Common myeloid progenitor, CD34-positive (primary cell): ENCODE measurements at regions of chr11 and their contacts with region 1.

Region 1: GRCh38 chr11:1694064-1694845 is 2.7 kb upstream of the KRTAP5-6 start:
- DNase-seq: peak; percentile 71 to 82 (median 79)
- H3K4me3 ChIP-seq: peak overlapping the region in 3 of 7 experiments; percentile 57 to 69 (median 63)
- H3K27ac ChIP-seq: no peak overlapping the region
- H3K4me1 ChIP-seq: peaks cover 0 to 27% (median 22%) of the 10 kb centered on the region in 4 experiments
- H3K27me3 ChIP-seq: peaks cover 0 to 3% (median 0%) of the 10 kb centered on the region in 5 experiments

Region 2: GRCh38 chr11:1608363-1608762 is 85.9 kb before region 1 on chr11 and contains the start of gene KRTAP5-3:
- CTCF ChIA-PET with region 1: no interaction called
- POLR2A ChIA-PET with region 1: no interaction called
- DNase-seq: no peak
- H3K4me3 ChIP-seq: no peak within 1 kb of the TSS
- H3K27ac ChIP-seq: no peak within 1 kb of the TSS
- H3K4me1 ChIP-seq: no peaks in the 10 kb centered on the region
- H3K27me3 ChIP-seq: peaks cover 0 to 35% (median 9%) of the 10 kb centered on the region in 5 experiments

Region 3: GRCh38 chr11:1682225-1682905 is 11.9 kb before region 1 on chr11:
- CTCF ChIA-PET with region 1: interaction called, 36 read pairs
- POLR2A ChIA-PET with region 1: no interaction called
- DNase-seq: peak in 2 of 3 donors; percentile 50 to 57
- H3K4me3 ChIP-seq: no peak overlapping the region
- H3K27ac ChIP-seq: no peak overlapping the region
- H3K4me1 ChIP-seq: peaks cover 0 to 10% (median 7%) of the 10 kb centered on the region in 4 experiments
- H3K27me3 ChIP-seq: no peaks in the 10 kb centered on the region

Region 4: DNA sequence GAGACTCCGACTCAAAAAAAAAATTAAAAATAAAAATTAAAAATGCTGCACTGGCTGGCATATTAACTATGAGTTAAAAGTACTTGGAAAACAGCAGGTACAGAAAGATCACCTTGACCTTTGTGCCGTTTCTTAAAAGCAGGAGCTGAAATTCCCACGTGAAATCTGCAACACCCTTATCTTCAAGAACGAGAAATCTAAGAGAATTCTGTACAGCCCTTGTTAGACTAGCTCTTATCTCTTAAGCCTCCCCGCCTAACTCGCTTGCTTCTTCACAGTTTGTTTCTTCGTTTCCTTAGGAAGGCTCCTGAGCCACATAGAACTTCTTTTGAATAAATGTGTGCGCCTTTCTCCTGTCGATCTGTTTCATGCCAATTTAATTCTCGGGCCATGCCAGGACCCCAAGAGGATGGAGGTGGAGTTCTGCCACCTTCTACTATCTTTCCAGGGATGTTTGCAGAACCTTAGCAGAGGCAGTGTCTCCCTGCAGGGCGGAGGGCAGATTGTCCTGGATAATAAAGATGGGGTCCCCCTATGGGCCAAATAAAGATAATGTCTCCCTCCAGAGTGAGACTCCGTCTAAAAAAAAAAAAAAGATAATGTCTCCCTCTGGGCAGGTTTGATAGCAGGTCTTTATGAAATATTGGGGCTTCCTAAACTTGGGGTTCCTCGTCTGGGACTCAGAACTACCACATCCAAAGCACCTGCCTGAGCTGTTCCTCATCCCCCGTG is 113.2 kb after region 1 on chr11:
- CTCF ChIA-PET with region 1: interaction called, 58 read pairs
- POLR2A ChIA-PET with region 1: no interaction called
- DNase-seq: peak; percentile 38 to 66 (median 61)
- H3K4me3 ChIP-seq: no peak overlapping the region
- H3K27ac ChIP-seq: no peak overlapping the region
- H3K4me1 ChIP-seq: peaks cover 0 to 12% (median 4%) of the 10 kb centered on the region in 4 experiments
- H3K27me3 ChIP-seq: peaks cover 0 to 20% (median 4%) of the 10 kb centered on the region in 5 experiments

Region 5: DNA sequence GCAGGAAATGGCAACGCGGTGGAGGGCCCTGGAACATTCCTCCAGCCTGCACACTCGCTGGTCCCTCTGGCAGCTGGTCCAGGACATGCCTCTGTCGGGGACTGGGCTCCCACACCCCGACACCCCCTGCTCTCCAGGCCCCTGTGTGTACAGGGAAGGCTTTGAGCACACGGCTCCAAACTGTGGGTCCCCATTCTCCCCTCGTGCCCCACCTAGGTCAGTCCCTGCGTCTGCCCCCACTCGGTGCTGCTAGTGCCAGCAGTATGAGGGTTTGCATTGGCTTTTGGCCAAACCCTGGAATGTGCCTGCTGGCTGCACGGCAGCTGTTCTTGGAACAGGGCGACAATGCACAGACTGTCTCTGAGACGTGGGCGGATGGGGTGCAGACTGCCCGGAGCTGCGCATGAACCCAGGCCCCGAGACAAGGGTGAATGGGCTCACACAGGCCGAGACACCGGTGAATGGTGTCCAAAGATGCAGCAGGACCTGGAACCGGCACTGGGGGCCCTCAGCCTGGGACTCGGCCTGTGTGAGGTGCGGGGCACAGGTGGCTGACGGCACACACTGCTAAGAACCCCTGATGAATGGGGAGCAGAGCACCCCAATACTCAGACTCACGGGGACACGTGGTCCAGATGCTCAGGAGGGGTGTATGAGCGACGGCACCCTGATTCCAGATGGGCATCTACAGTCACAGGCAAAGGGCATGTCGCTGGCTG is 133.0 kb after region 1 on chr11:
- CTCF ChIA-PET with region 1: interaction called, 213 read pairs
- POLR2A ChIA-PET with region 1: interaction called, 3 read pairs
- DNase-seq: no peak
- H3K4me3 ChIP-seq: no peak overlapping the region
- H3K27ac ChIP-seq: no peak overlapping the region
- H3K4me1 ChIP-seq: peaks cover 0 to 11% (median 8%) of the 10 kb centered on the region in 4 experiments
- H3K27me3 ChIP-seq: peaks cover 0 to 13% (median 0%) of the 10 kb centered on the region in 5 experiments

Region 6: GRCh38 chr11:1876361-1877063 is 182.3 kb after region 1 on chr11:
- CTCF ChIA-PET with region 1: interaction called, 16 read pairs
- POLR2A ChIA-PET with region 1: no interaction called
- DNase-seq: peak in 2 of 3 donors; percentile 41 to 42
- H3K4me3 ChIP-seq: peak overlapping the region in 1 of 7 experiments; percentile 42
- H3K27ac ChIP-seq: no peak overlapping the region
- H3K4me1 ChIP-seq: peaks cover 0 to 55% (median 44%) of the 10 kb centered on the region in 4 experiments
- H3K27me3 ChIP-seq: no peaks in the 10 kb centered on the region